HEK293 (cell line): ENCODE measurements at regions of chr7 and their contacts with region 1.

Region 1: GRCh38 chr7:31134246-31135188 is 82.4 kb downstream of the ADCYAP1R1 start:
- H3K4me3 ChIP-seq: no peak overlapping the region
- H3K27ac ChIP-seq: no peak overlapping the region
- H3K4me1 ChIP-seq: no peaks in the 10 kb centered on the region
- CTCF ChIP-seq: no peak

Region 2: DNA sequence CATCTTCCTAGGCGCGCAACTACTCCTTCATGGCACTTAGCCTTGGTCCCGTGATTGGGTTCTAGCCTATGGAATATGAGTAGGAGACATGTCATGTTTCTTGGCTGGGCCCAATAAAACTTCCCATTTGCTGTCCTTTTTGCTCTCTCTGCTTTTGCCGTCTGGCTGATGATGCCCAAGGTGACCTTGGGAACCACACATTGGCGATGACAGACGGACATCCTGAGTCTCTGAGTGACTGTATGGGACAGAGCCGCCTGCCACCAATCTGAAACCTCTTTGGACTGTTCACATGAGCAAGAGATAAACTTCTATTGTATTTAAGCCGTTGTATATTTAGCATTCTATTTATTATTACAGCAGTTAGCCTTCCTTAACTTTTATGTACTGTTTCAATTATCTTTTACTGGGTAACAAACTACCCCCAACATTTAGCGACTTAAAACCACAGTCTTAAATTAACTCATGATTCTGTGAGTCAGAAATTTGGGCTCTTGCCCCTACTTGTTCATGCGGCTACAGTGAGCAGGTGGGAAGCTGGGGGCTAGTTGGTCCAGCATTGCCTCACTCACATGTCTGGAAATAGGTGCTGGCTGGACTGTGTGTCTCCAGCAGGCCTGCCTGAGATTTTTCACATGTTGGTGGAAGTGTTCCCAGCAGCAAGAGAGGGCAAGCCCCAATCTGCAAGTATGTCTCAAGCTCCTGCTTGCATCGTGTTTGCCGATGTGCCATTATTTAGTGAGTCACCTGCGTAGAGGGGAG is 727.7 kb before region 1 on chr7:
- CTCF ChIA-PET with region 1: no interaction called
- POLR2A ChIA-PET with region 1: no interaction called
- H3K4me3 ChIP-seq: no peak overlapping the region
- H3K27ac ChIP-seq: no peak overlapping the region
- H3K4me1 ChIP-seq: peaks cover 3% of the 10 kb centered on the region; the same call in 1 of the 2 replicates
- CTCF ChIP-seq: no peak

Region 3: GRCh38 chr7:30983042-30983913 is 151.2 kb before region 1 on chr7:
- CTCF ChIA-PET with region 1: interaction called, 373 read pairs
- POLR2A ChIA-PET with region 1: no interaction called
- H3K4me3 ChIP-seq: no peak overlapping the region
- H3K27ac ChIP-seq: no peak overlapping the region
- H3K4me1 ChIP-seq: no peaks in the 10 kb centered on the region
- CTCF ChIP-seq: peak; percentile 85

Region 4: GRCh38 chr7:31098642-31099360 is 35.7 kb before region 1 on chr7:
- CTCF ChIA-PET with region 1: no interaction called
- POLR2A ChIA-PET with region 1: no interaction called
- H3K4me3 ChIP-seq: no peak overlapping the region
- H3K27ac ChIP-seq: no peak overlapping the region
- H3K4me1 ChIP-seq: no peaks in the 10 kb centered on the region
- CTCF ChIP-seq: no peak

Region 5: GRCh38 chr7:31633894-31634494 is 499.5 kb after region 1 on chr7:
- CTCF ChIA-PET with region 1: interaction called, 61 read pairs
- POLR2A ChIA-PET with region 1: no interaction called
- H3K4me3 ChIP-seq: no peak overlapping the region
- H3K27ac ChIP-seq: no peak overlapping the region
- H3K4me1 ChIP-seq: no peaks in the 10 kb centered on the region
- CTCF ChIP-seq: no peak

Region 6: DNA sequence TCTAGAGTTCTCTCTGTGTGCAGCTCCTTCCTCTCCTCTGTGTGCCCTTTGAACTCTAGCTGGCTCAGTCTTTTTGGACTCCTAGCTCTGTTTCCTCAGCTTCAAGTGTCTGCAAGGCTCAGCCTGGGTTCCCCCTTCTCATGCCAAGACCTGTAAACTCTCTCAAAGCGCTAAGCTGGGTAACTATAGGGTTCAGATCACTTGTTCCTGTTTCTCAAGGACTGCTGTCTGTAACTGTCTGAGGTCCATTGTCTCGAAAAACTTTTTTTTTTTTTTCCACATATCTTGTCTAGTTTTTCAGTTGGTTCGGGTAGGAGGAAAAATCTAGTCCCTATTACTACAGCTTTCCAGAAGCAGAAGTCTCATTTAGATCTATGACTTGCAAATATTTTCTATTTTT is 505.9 kb after region 1 on chr7:
- CTCF ChIA-PET with region 1: interaction called, 61 read pairs
- POLR2A ChIA-PET with region 1: no interaction called
- H3K4me3 ChIP-seq: no peak overlapping the region
- H3K27ac ChIP-seq: no peak overlapping the region
- H3K4me1 ChIP-seq: no peaks in the 10 kb centered on the region
- CTCF ChIP-seq: no peak